ENCODE measurements at regions of chr12 and their contacts with region 1.

Region 1: GRCh38 chr12:113030875-113031525 is 25.5 kb upstream of the DTX1 start:
- DNase-seq: peak; percentile 21 to 52
- H3K4me3 ChIP-seq: no peak overlapping the region
- H3K27ac ChIP-seq: no peak overlapping the region
- H3K4me1 ChIP-seq: no peaks in the 10 kb centered on the region
- H3K27me3 ChIP-seq: 0 out of 2 replicates have a peak, but pooled peaks cover 3% of the 10 kb centered on the region
- CTCF ChIP-seq: peak; percentile 79

Region 2: GRCh38 chr12:112125250-112125999 is 905.6 kb before region 1 on chr12 and contains the start of gene TRAFD1:
- CTCF ChIA-PET with region 1: no interaction called
- POLR2A ChIA-PET with region 1: no interaction called
- intact Hi-C with region 1: no loop called
- DNase-seq: peak; percentile 94 to 98
- H3K4me3 ChIP-seq: peak within 1 kb of the TSS; percentile 89
- H3K27ac ChIP-seq: 0 out of 2 replicates have a peak within 1 kb of the TSS, but pooled peaks have one; percentile 17
- H3K4me1 ChIP-seq: peaks cover 67% of the 10 kb centered on the region
- H3K27me3 ChIP-seq: no peaks in the 10 kb centered on the region
- CTCF ChIP-seq: no peak
- total RNA-seq, gene TRAFD1: 34.1 and 38.7 TPM in 2 replicates

Region 3: DNA sequence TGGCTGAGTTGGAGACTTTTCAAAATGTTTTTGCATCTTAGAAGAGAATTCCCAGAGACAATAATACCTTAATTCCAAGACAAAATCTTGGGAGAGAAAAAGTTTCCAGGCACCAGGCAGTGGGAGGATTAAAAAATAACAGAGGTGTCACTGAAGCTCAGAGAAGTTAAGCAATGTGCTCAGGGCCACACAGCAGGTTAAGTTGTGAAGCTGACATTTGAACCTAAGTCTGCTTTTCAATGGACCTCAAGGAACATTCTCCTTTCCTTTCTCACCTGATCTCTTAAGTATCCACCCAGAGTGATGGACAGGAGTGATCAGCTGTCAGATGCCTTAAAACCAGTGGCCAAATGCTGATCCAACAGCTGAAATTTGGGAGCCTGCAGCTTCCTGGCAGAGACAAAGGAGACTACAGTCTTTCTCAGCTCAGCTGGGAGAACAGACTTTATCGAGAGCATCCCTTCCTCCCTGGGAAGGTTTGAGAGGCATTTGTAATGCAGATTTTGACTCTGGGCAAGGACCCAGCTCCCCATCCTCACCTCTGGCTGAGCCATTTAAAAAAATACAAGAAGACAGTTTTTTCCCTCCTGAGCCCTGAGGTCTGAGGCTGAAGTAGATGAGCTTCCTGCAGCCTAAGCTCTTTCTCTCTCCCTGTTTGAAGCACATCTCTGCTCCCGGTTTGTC is 414.4 kb before region 1 on chr12:
- CTCF ChIA-PET with region 1: interaction called, 11 read pairs
- POLR2A ChIA-PET with region 1: no interaction called
- intact Hi-C with region 1: no loop called
- DNase-seq: no peak
- H3K4me3 ChIP-seq: no peak overlapping the region
- H3K27ac ChIP-seq: no peak overlapping the region
- H3K4me1 ChIP-seq: no peaks in the 10 kb centered on the region
- H3K27me3 ChIP-seq: peaks cover 80% of the 10 kb centered on the region
- CTCF ChIP-seq: no peak

Region 4: GRCh38 chr12:112798006-112798760 is 232.8 kb before region 1 on chr12:
- CTCF ChIA-PET with region 1: no interaction called
- POLR2A ChIA-PET with region 1: no interaction called
- intact Hi-C with region 1: no loop called
- DNase-seq: no peak
- H3K4me3 ChIP-seq: no peak overlapping the region
- H3K27ac ChIP-seq: no peak overlapping the region
- H3K4me1 ChIP-seq: no peaks in the 10 kb centered on the region
- H3K27me3 ChIP-seq: peaks cover 68% of the 10 kb centered on the region
- CTCF ChIP-seq: no peak